HepG2 (cell line): ENCODE measurements at regions of chr21 and their contacts with region 1.

Region 1: GRCh38 chr21:14889080-14889810 is 175.6 kb downstream of the NRIP1 start:
- DNase-seq: peak; percentile 92
- ATAC-seq: peak; percentile 91
- H3K4me3 ChIP-seq: peak overlapping the region in 1 of 3 experiments; percentile 18; a peak in 1 of 6 replicates
- H3K27ac ChIP-seq: peak overlapping the region; percentile 83
- H3K4me1 ChIP-seq: peaks cover 39% of the 10 kb centered on the region
- H3K27me3 ChIP-seq: no peaks in the 10 kb centered on the region
- CTCF ChIP-seq: no peak
- EP300 ChIP-seq: peak; percentile 97 to 98
- POLR2A ChIP-seq: no peak
- RAD21 ChIP-seq: 0 out of 2 replicates have a peak, but pooled peaks have one; percentile 31

Region 2: GRCh38 chr21:14591882-14592281 is 297.4 kb before region 1 on chr21:
- CTCF ChIA-PET with region 1: no interaction called
- POLR2A ChIA-PET with region 1: no interaction called
- in situ Hi-C with region 1: no loop called
- intact Hi-C with region 1: no loop called
- DNase-seq: no peak
- ATAC-seq: no peak
- H3K4me3 ChIP-seq: no peak overlapping the region
- H3K27ac ChIP-seq: no peak overlapping the region
- H3K4me1 ChIP-seq: no peaks in the 10 kb centered on the region
- H3K27me3 ChIP-seq: no peaks in the 10 kb centered on the region
- CTCF ChIP-seq: no peak
- EP300 ChIP-seq: no peak
- POLR2A ChIP-seq: no peak
- RAD21 ChIP-seq: no peak

Region 3: DNA sequence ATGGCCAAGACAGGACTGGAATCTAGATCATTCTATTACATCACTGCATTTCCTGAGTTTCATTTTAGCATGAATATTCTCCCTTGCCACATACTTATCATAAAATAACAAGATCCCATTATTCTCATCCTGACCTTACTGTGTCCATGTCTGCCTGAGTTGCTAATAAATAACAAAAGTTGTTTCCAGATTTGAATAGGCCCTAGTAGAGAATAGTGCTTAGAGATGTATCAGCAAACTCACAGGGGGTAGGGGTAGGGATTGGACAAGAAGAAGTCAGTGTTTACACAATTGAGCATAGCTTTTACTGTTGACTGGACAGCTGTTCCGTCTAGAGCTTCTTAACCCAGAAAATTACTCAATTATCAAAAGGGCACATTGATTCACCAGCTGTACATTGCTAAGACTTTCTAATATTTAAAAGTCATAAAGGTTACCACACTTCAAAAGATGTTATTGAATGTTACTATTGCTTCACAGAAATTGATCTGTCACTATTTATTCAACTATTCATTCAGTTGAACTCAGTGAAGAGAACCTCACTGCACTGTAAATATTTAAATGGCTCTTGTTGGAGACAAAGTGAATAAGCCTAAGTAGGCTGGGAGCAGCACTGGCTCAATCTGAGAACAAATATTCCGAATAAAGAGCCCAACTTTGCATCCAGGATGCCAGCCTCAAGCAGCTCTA is 53.7 kb after region 1 on chr21:
- CTCF ChIA-PET with region 1: no interaction called
- POLR2A ChIA-PET with region 1: interaction called, 28 read pairs
- in situ Hi-C with region 1: no loop called
- intact Hi-C with region 1: loop called (anchors 2 kb)
- DNase-seq: peak; percentile 91
- ATAC-seq: peak; percentile 96
- H3K4me3 ChIP-seq: no peak overlapping the region; a peak in 1 of 6 replicates
- H3K27ac ChIP-seq: peak overlapping the region; percentile 71
- H3K4me1 ChIP-seq: peaks cover 55% of the 10 kb centered on the region
- H3K27me3 ChIP-seq: no peaks in the 10 kb centered on the region
- CTCF ChIP-seq: no peak
- EP300 ChIP-seq: peak; percentile 62 to 97
- POLR2A ChIP-seq: no peak
- RAD21 ChIP-seq: no peak

Region 4: GRCh38 chr21:14959343-14959742 is 70.1 kb after region 1 on chr21:
- CTCF ChIA-PET with region 1: no interaction called
- POLR2A ChIA-PET with region 1: no interaction called
- in situ Hi-C with region 1: no loop called
- intact Hi-C with region 1: no loop called
- DNase-seq: no peak
- ATAC-seq: no peak
- H3K4me3 ChIP-seq: no peak overlapping the region
- H3K27ac ChIP-seq: no peak overlapping the region
- H3K4me1 ChIP-seq: no peaks in the 10 kb centered on the region
- H3K27me3 ChIP-seq: no peaks in the 10 kb centered on the region
- CTCF ChIP-seq: no peak
- EP300 ChIP-seq: no peak
- POLR2A ChIP-seq: no peak
- RAD21 ChIP-seq: no peak